Stomach (tissue), 19 donors: ENCODE measurements at regions of chr3 and their contacts with region 1.

Region 1: GRCh38 chr3:112519424-112520001 is 20.2 kb upstream of the BTLA start:
- DNase-seq: peak in 1 of 2 donors; percentile 84
- H3K4me3 ChIP-seq: no peak overlapping the region
- H3K27ac ChIP-seq: no peak overlapping the region
- H3K4me1 ChIP-seq: no peaks in the 10 kb centered on the region
- H3K27me3 ChIP-seq: no peaks in the 10 kb centered on the region
- CTCF ChIP-seq: peak in 5 of 7 experiments; percentile 61 to 72 (median 69)
- EP300 ChIP-seq: no peak
- POLR2A ChIP-seq: no peak

Region 2: DNA sequence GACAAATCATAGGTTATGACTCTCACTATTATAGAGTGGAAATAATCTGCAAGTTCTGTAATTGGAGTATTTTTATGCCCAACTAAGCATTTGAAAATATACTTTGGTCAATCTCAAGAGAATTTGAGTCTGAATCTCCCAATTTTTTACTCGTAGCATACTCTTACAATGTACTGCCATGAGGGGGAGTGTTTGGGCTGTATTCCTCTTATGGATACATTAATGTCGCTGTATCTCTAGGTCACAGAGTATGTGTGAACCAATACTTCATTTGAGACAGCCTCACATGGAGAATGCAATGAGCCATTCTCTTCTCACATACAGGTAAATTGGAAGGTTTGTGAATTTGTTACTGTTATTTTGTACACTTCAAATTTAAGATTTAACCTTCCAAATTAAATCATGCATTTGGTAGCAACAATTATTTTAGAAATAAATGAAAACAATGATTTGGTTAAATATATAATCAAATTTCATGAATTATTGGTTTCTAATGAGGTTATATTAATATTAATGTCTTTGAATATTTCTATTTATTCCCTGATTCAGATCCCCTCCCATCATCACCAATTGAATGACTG is 192.1 kb before region 1 on chr3:
- intact Hi-C with region 1: loop called (anchors 10 kb)
- DNase-seq: peak in 1 of 2 donors; percentile 84
- H3K4me3 ChIP-seq: no peak overlapping the region
- H3K27ac ChIP-seq: no peak overlapping the region
- H3K4me1 ChIP-seq: peaks cover 0 to 2% (median under 1%) of the 10 kb centered on the region in 4 donors
- H3K27me3 ChIP-seq: peaks cover 0 to 3% (median 0%) of the 10 kb centered on the region in 3 donors
- CTCF ChIP-seq: peak in 5 of 7 experiments; percentile 19 to 53 (median 43)
- EP300 ChIP-seq: no peak
- POLR2A ChIP-seq: no peak